ENCODE measurements at regions of chr1 and their contacts with region 1.

Region 1: DNA sequence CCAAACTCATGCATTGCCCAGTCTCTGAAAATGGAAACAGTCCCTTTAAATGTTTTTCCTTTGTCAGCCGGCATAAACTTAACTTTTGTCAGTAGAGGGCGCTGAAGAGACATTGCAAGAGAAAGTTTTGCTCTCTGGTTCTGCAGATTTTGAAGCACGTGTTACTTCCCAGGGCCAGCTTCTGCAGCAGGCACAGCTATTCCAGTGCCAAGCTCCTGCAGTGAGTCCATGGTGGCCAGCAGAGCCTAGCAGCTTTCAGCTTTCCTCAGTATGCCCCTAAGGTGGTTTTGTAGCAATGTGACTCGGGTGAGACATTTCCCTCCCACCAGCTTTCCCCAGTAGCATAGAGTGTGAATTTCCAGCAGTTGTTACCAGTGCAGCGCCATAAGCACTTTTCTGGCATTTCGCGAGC is 2.6 kb upstream of the IFI44L start:
- DNase-seq: peak; percentile 14
- H3K4me3 ChIP-seq: no peak overlapping the region
- H3K27me3 ChIP-seq: no peaks in the 10 kb centered on the region
- CTCF ChIP-seq: peak; percentile 88

Region 2: GRCh38 chr1:77906019-77906545 is 711.5 kb before region 1 on chr1:
- CTCF ChIA-PET with region 1: no interaction called
- POLR2A ChIA-PET with region 1: no interaction called
- DNase-seq: no peak
- H3K4me3 ChIP-seq: no peak overlapping the region
- H3K27me3 ChIP-seq: no peaks in the 10 kb centered on the region
- CTCF ChIP-seq: no peak

Region 3: DNA sequence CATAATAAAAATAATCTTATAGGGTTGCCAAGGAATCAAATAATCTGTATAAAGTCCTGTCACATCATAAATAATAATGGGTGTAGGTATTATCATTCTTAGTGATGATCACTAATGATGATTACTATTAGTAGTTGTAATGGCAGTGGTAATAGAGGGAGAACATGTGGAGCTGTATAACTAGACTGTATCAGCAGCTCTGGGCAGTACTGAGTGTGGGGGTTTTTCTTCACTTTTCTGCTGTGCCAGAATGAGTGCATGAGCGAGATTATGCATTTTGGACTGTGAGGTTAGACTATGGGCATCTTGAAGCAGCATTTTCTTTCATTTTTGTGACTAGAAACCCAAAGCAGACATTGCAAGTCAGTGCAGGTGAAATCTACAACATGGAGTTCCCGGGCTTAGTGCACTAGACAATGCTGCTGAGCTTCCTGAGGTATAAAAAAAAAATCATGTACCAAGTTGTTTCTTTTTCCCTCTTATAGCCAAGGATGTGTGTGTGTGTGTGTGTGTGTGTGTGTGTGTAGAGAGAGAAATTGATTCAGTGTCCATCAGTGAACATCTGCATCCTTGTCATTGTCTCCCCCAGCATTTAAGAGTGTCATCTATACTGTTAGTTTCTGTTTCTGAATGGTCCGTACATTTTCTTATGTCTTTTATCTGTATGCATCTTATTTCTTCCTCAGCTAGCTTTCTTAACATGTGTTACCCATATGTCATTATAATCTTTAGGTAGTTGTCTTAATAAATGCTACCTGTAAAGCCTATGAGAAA is 485.3 kb before region 1 on chr1:
- CTCF ChIA-PET with region 1: interaction called, 17 read pairs
- POLR2A ChIA-PET with region 1: no interaction called
- DNase-seq: no peak
- H3K4me3 ChIP-seq: no peak overlapping the region
- H3K27me3 ChIP-seq: no peaks in the 10 kb centered on the region
- CTCF ChIP-seq: no peak

Region 4: GRCh38 chr1:78145105-78145580 is 472.5 kb before region 1 on chr1:
- CTCF ChIA-PET with region 1: interaction called, 12 read pairs
- POLR2A ChIA-PET with region 1: no interaction called
- DNase-seq: no peak
- H3K4me3 ChIP-seq: no peak overlapping the region
- H3K27me3 ChIP-seq: peaks cover 2% of the 10 kb centered on the region; the same call in 1 of the 2 replicates
- CTCF ChIP-seq: peak; percentile 83

Region 5: DNA sequence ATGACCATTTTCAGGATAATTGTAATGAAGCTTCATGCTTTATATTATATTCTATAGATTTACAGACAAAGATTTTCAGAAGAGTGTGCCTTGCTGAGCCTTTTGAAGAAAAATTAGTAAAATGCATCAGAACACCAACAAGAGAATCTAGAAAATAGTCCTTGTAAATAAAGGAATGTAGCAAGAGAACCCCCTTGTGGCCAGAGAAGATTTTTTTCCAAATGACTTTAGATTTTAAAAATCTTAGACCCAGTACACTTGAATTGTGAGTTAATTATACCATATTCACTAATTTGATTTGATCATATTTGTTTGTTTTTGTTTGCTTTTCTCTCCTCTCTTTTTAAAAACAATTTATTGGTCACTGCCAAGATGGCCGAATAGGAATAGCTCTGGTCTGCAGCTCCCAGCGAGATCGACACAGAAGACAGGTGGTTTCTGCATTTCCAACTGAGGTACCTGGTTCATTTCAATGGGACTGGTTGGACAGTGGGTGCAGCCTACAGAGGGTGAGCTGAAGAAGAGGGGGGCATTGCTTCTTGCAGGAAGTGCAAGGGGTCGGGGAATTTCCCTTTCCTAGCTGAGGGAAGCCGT is 10.2 kb before region 1 on chr1:
- CTCF ChIA-PET with region 1: interaction called, 15 read pairs
- POLR2A ChIA-PET with region 1: no interaction called
- DNase-seq: no peak
- H3K4me3 ChIP-seq: no peak overlapping the region
- H3K27me3 ChIP-seq: no peaks in the 10 kb centered on the region
- CTCF ChIP-seq: peak; percentile 50

Region 6: GRCh38 chr1:78667939-78668338 is 50.3 kb after region 1 on chr1:
- CTCF ChIA-PET with region 1: interaction called, 26 read pairs
- POLR2A ChIA-PET with region 1: no interaction called
- DNase-seq: no peak
- H3K4me3 ChIP-seq: no peak overlapping the region
- H3K27me3 ChIP-seq: no peaks in the 10 kb centered on the region
- CTCF ChIP-seq: no peak

Region 7: GRCh38 chr1:78676347-78676982 is 58.8 kb after region 1 on chr1:
- CTCF ChIA-PET with region 1: interaction called, 26 read pairs
- POLR2A ChIA-PET with region 1: no interaction called
- DNase-seq: no peak
- H3K4me3 ChIP-seq: no peak overlapping the region
- H3K27me3 ChIP-seq: no peaks in the 10 kb centered on the region
- CTCF ChIP-seq: peak; percentile 71

Region 8: GRCh38 chr1:78682496-78682895 is 64.9 kb after region 1 on chr1:
- CTCF ChIA-PET with region 1: interaction called, 22 read pairs
- POLR2A ChIA-PET with region 1: no interaction called
- DNase-seq: no peak
- H3K4me3 ChIP-seq: no peak overlapping the region
- H3K27me3 ChIP-seq: no peaks in the 10 kb centered on the region
- CTCF ChIP-seq: no peak